WTC11 (cell line): ENCODE measurements at regions of chr1 and their contacts with region 1.

Region 1: DNA sequence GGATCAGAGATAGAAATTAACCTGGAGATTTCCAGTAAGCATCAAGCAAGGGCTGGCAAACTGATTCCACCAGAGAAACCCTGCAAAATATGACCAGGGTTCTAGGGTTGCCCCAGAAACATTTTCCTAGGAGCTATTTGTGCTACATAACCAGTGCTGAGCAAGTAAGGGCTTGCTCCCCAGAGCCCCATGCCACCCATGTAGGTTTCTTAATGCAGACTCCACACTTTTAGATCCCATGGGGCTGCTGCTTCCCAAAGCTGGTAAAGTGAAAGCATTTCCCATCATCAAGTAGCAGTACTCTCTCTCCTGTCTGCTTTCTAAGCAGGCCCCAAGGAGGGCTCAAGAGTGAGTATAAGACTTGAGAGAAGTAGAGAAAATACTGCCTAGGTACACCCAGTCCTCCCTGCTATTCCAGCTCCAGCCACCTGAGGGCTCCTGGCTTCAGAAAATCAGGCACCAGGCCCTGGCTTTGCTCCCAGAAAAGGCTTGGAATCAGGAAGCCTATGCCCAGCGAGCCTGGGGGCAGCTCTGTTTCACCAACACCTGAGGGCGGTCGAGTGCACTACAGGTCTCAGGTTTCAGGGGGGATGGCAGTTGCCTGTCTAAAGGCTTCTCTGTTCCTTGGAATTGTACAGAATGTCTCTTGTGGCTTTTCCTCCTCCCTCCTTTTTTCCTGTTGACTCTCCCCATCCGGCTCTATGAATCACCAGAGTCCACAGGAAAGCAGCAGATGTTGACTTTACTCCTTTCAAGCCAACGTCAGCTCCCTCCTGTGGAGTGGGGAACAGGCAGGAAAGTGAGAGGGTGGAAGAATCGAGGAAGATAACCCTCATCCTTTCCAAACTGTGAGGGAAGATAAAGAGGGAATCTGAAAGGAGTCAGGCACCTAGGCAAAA is 6.2 kb upstream of the ANKRD35 start:
- DNase-seq: peak; percentile 98
- ATAC-seq: peak; percentile 100
- H3K4me3 Mint-ChIP-seq: peak overlapping the region; percentile 62
- H3K27ac Mint-ChIP-seq: peak overlapping the region; percentile 95
- H3K4me1 Mint-ChIP-seq: peaks cover 25% of the 10 kb centered on the region
- H3K27me3 Mint-ChIP-seq: peaks cover 15% of the 10 kb centered on the region
- CTCF ChIP-seq: peak; percentile 85

Region 2: GRCh38 chr1:145871994-145872924 is 19.6 kb before region 1 on chr1:
- CTCF ChIA-PET with region 1: interaction called, 53 read pairs
- POLR2A ChIA-PET with region 1: interaction called, 4 read pairs
- DNase-seq: peak; percentile 57
- ATAC-seq: peak; percentile 76
- H3K4me3 Mint-ChIP-seq: peak overlapping the region; percentile 69
- H3K27ac Mint-ChIP-seq: no peak overlapping the region; the same call in 1 of the 2 replicates
- H3K4me1 Mint-ChIP-seq: peaks cover 37% of the 10 kb centered on the region
- H3K27me3 Mint-ChIP-seq: peaks cover 39% of the 10 kb centered on the region
- CTCF ChIP-seq: no peak

Region 3: DNA sequence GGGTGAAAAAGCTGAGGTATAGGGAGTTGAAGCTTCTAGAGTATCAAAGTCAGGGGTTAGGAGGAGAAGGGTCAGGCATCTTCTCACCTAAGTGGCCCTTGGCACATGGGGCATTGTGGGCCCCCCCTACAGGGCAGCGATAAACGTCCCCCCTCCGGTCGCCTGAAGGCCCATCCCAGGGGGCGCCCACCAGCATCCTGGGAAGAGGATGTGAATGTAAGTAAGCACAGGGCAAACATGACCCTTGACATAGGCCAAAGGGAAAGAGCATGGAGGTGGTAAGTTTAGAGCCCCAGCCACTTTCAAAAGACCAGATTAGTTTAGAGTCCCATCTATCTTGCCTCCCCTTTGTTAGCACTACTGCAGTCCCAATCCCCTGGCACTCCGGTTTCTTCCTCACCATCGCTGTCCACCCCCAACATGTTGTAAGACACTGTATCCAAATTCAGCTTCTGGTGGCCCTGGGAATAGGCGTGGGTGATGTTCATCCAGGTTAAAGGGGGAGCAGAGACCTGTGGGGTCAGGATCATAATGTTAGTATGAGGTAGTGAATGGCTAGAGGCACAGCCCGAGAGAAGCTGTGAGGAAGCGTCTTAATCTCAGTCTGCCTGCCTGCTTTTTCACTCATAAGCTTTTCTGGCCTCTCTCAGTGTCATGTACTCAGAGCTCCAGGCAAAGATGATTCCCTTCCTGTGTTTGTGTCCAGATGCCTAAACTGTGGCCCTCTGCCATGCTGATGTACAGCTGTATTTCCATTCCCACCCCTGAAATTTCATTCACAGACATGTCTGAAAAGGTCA is 15.3 kb after region 1 on chr1:
- CTCF ChIA-PET with region 1: interaction called, 93 read pairs
- POLR2A ChIA-PET with region 1: interaction called, 7 read pairs
- DNase-seq: no peak
- ATAC-seq: peak; percentile 25; the same call in 1 of the 2 replicates
- H3K4me3 Mint-ChIP-seq: no peak overlapping the region
- H3K27ac Mint-ChIP-seq: no peak overlapping the region
- H3K4me1 Mint-ChIP-seq: peaks cover 14% of the 10 kb centered on the region
- H3K27me3 Mint-ChIP-seq: peaks cover 3% of the 10 kb centered on the region
- CTCF ChIP-seq: no peak

Region 4: DNA sequence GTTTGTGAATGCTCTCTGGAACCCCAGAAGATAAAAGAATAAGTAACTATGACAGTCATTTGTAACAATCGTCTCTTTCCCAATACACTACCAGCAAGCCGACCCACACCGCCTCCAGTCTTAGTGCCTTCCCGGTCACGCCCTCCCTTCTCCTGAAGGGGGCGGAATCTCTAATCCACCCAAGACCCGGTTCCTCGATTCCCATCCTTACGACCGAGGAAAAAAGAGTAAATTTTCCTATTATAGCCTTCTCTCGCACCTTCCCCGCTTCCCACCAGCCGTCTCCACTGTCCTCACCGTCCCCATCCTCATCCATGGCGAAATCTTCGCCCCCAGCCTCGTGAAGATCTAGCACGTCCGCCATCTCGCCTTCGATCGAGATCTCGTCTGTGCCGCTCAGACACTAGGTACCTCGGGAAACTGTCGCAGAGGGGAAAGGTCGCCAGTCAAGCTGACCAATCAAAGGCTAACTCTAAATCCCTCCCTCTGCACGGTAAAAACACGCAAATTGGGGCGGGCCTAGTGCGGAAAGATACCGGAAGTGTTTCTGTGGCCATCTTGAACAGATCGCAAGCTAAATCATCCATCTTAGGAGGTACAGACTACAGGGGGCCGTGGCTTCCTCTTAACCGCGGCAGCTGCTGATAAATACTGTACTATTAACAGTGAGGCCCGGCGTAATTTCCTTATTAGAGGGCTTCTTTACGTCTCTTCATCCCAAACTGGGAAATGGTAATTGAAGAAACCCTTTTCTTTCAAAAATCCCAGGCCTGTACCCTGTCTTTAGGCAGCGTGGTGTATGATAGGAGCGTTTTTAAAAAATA is 35.4 kb after region 1 on chr1 and contains the start of gene RBM8A:
- CTCF ChIA-PET with region 1: interaction called, 22 read pairs
- POLR2A ChIA-PET with region 1: interaction called, 5 read pairs
- DNase-seq: peak; percentile 91
- ATAC-seq: peak; percentile 98
- H3K4me3 Mint-ChIP-seq: no peak within 1 kb of the TSS; the same call in none of the 2 replicates
- H3K27ac Mint-ChIP-seq: no peak within 1 kb of the TSS; the same call in 1 of the 2 replicates
- H3K4me1 Mint-ChIP-seq: peaks cover 17% of the 10 kb centered on the region
- H3K27me3 Mint-ChIP-seq: no peaks in the 10 kb centered on the region
- CTCF ChIP-seq: peak; percentile 23; the same call in 1 of the 2 replicates
- total RNA-seq, gene RBM8A: 199 to 215 TPM (median 212 TPM) in 3 replicates

Region 5: GRCh38 chr1:145963995-145964901 is 72.4 kb after region 1 on chr1 and contains the starts of genes ANKRD34A and POLR3GL:
- CTCF ChIA-PET with region 1: interaction called, 23 read pairs
- POLR2A ChIA-PET with region 1: interaction called, 5 read pairs
- DNase-seq: peak; percentile 96
- ATAC-seq: peak; percentile 85
- H3K4me3 Mint-ChIP-seq: peak within 1 kb of the TSS; percentile 91
- H3K27ac Mint-ChIP-seq: peak within 1 kb of the TSS; percentile 68; the same call in 1 of the 2 replicates
- H3K4me1 Mint-ChIP-seq: peaks cover 38% of the 10 kb centered on the region
- H3K27me3 Mint-ChIP-seq: peaks cover 70% of the 10 kb centered on the region
- CTCF ChIP-seq: no peak
- total RNA-seq, gene ANKRD34A: 0.21 to 0.44 TPM (median 0.22 TPM) in 3 replicates
- total RNA-seq, gene POLR3GL: 3.8 to 8.3 TPM (median 6.7 TPM) in 3 replicates

Region 6: GRCh38 chr1:146007506-146008133 is 115.8 kb after region 1 on chr1:
- CTCF ChIA-PET with region 1: interaction called, 26 read pairs
- POLR2A ChIA-PET with region 1: no interaction called
- DNase-seq: no peak
- ATAC-seq: no peak
- H3K4me3 Mint-ChIP-seq: no peak overlapping the region
- H3K27ac Mint-ChIP-seq: no peak overlapping the region
- H3K4me1 Mint-ChIP-seq: no peaks in the 10 kb centered on the region
- H3K27me3 Mint-ChIP-seq: no peaks in the 10 kb centered on the region
- CTCF ChIP-seq: no peak; the same call in 1 of the 2 replicates

Region 7: GRCh38 chr1:146019231-146020057 is 127.6 kb after region 1 on chr1:
- CTCF ChIA-PET with region 1: interaction called, 29 read pairs
- POLR2A ChIA-PET with region 1: no interaction called
- DNase-seq: peak; percentile 72
- ATAC-seq: peak; percentile 95
- H3K4me3 Mint-ChIP-seq: peak overlapping the region; percentile 68
- H3K27ac Mint-ChIP-seq: no peak overlapping the region
- H3K4me1 Mint-ChIP-seq: peaks cover 15% of the 10 kb centered on the region
- H3K27me3 Mint-ChIP-seq: peaks cover 69% of the 10 kb centered on the region
- CTCF ChIP-seq: no peak